Left ventricle myocardium superior (tissue), 1 donor: ENCODE measurements at regions of chr10 and their contacts with region 1.

Region 1: GRCh38 chr10:60208676-60209269 is 180.9 kb downstream of the ANK3 start:
- DNase-seq: no peak
- ATAC-seq: peak; percentile 32

Region 2: DNA sequence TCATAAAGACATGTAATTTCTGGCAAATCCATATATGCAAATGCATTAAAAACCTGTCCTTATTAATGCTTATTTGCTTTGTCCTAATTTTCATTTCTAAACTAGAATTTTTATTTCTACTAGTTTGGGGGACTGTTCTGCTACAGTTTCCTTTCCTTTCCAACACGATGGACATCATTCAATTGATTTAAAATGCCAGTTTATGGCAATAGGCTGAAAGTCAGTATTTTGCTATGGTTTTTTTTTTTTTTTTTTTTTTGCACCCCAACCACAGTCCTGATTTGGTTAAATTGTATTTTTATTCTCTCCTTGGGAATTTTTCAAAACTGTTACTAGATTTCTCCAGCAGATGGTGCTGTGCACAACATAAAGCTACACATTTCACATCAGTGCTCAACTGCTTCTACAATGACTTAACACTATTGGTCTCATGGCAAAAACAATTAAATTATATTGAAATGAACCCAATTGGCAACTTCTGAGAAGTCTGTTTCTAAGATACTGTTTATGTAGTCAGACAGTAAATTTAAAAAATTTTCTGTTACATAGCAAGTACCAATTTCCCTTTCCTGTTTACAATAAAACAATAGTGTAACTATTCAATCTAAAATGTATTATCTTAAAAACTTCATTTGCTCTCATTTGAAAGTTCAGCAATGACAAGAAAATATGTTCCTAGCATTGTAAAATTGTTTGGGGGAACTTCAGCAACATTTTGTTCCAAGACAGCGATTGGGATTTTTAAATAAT is 108.6 kb before region 1 on chr10:
- intact Hi-C with region 1: loop called (anchors 5 kb)
- DNase-seq: no peak
- ATAC-seq: peak; percentile 67

Region 3: GRCh38 chr10:60114765-60115586 is 93.8 kb before region 1 on chr10:
- intact Hi-C with region 1: loop called (anchors 5 kb)
- DNase-seq: no peak
- ATAC-seq: peak; percentile 74

Region 4: DNA sequence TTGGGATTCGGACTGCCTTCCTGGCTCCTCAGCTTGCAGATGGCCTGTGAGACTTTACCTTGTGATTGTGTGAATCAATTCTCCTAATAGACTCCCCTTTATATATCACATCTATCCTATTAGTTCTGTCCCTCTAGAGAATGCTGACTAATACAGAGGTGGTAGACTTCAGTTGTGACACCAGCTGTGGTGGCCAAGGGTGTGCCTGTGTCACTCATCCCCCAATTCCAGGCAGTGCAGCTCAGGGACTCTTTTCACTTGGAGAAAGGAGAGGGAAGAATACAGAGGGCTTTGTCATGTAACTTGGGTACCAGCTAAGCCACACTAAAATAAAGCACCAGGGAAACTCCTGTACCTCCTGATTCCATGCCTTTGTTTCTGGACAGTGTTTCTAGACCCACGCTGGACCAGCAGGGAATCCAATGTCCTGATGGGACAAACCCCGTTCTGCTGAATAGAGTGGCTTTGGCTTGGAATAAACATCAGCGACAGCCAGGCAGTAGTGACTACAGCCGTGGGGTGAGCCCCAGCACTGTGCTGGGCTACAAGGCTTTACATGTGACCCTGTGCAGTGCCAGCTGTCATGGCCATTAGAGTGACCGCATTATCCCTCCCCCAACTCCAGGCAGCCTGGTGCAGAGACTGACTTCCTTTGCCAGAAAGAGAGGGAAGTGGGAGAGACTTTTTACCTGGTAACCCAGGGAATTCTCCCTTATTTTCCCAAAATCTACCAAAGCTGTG is 52.7 kb before region 1 on chr10:
- intact Hi-C with region 1: no loop called
- DNase-seq: no peak
- ATAC-seq: peak; percentile 82

Region 5: DNA sequence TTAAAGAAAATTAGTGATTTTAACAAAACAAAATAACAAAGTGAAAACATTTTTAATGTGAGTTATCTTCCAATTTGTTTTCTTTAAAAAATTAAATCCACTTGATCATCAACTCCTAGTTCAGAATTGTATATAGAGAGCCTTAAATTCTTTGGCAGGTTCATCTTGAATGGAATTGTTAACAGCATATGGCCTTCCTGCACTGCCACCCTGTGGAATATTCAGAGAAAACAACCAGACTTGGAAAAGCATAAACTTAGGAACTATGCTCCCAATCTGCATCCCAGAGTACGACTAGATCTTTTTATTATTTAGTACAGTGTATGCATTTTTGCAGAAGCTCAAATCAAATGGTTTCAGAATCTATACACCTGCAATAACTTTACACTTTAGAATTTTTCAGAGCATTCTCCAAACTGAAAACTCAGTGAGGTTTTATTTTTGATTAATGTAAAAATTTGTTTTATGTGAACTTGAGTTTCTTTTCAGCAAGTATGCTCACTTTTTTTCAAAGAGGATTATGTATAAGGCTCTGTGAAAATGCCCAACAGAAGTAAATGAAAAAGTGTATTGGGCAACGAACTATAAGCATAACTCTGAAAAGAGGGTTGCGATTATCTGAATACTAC is 225.8 kb after region 1 on chr10:
- intact Hi-C with region 1: loop called (anchors 10 kb)
- DNase-seq: no peak
- ATAC-seq: peak; percentile 72